Activated T-helper 2 cell treated with anti-CD3 and anti-CD28 coated beads, Interferon-gamma antibody, Interleukin-2, Interleukin-4, amounts not matched to agents 10 μg/mL and 5 μg/mL and 100 μg/mL, durations not matched to agents 14 hours and 24 hours and 36 hours (primary cell): ENCODE measurements at regions of chr10 and their contacts with region 1.

Region 1: GRCh38 chr10:62681211-62681940 is 123.1 kb upstream of the ADO start:
- DNase-seq: peak; percentile 63
- H3K4me3 Mint-ChIP-seq: no peak overlapping the region
- H3K27ac Mint-ChIP-seq: peak overlapping the region; percentile 58
- H3K4me1 Mint-ChIP-seq: peaks cover 45% of the 10 kb centered on the region
- H3K27me3 Mint-ChIP-seq: no peaks in the 10 kb centered on the region

Region 2: GRCh38 chr10:62422068-62422590 is 259.2 kb before region 1 on chr10:
- intact Hi-C with region 1: no loop called
- DNase-seq: no peak
- H3K4me3 Mint-ChIP-seq: no peak overlapping the region
- H3K27ac Mint-ChIP-seq: no peak overlapping the region
- H3K4me1 Mint-ChIP-seq: peaks cover 19% of the 10 kb centered on the region
- H3K27me3 Mint-ChIP-seq: peaks cover 8% of the 10 kb centered on the region

Region 3: GRCh38 chr10:62492012-62492869 is 189.1 kb before region 1 on chr10:
- intact Hi-C with region 1: no loop called
- DNase-seq: no peak
- H3K4me3 Mint-ChIP-seq: no peak overlapping the region
- H3K27ac Mint-ChIP-seq: no peak overlapping the region
- H3K4me1 Mint-ChIP-seq: no peaks in the 10 kb centered on the region
- H3K27me3 Mint-ChIP-seq: peaks cover 33% of the 10 kb centered on the region

Region 4: DNA sequence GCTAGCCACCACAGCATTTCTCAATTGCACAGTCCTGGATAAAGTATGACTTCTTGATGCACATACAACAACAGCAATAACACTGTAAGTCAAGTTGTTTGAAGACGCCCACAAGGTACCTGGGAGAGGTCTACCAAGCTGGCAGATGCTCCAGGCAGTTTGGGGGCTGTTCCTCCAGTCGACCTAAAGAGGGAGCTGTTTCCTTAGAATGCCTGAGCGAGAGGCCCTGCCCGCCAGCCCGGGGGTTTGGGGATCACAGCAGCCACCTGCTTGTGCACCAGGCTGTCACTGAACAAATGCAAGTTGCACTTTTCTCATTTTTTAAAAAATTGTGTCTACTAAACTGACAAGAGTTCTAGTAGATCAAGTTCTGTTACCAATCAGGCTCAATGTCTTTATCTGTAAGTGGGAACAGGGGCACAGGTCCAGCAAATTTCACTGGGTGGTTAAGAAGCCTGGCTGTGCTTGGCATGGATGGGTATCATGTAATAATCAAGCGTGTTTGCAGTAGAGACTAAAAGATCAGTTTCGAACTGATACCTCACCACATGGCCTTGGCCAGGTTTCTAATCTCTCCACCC is 70.6 kb before region 1 on chr10:
- intact Hi-C with region 1: loop called (anchors 1 kb)
- DNase-seq: peak; percentile 58
- H3K4me3 Mint-ChIP-seq: no peak overlapping the region
- H3K27ac Mint-ChIP-seq: no peak overlapping the region
- H3K4me1 Mint-ChIP-seq: peaks cover 52% of the 10 kb centered on the region
- H3K27me3 Mint-ChIP-seq: peaks cover 5% of the 10 kb centered on the region

Region 5: DNA sequence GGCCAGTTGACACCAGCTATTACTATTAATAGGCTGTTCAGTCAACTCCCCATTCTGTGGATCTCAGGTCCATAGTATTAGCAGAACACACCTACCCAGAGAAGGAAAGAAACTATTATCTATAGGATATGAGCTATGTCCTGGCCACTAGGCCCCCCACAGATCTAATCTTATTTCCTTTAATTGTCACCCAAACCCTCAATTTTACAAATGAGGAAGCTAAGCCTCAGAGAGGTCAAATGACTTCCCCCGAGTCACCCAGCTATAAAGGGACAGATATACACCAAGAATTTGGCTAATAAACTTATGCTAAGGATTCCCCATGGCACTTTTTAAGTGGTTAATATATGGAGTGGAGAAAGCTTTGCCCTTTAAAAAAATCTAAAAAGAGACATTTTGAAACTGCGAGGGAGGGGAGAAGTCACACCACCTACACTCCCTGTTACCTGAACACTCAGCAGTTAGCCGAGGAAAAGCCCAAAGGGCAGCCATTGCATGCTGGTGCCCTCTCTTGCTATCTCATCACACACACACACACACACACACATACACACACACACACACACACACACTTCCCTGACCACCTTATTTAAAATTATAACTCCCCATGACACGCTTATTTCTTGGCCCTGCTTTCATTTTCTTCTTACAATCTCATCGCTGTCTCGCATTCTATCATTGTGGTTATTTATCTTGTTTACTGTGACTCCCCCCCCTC is 33.8 kb before region 1 on chr10:
- intact Hi-C with region 1: loop called (anchors 1 kb)
- DNase-seq: no peak
- H3K4me3 Mint-ChIP-seq: no peak overlapping the region
- H3K27ac Mint-ChIP-seq: peak overlapping the region; percentile 39
- H3K4me1 Mint-ChIP-seq: peaks cover 58% of the 10 kb centered on the region
- H3K27me3 Mint-ChIP-seq: no peaks in the 10 kb centered on the region

Region 6: GRCh38 chr10:62669341-62669740 is 12.0 kb before region 1 on chr10:
- intact Hi-C with region 1: loop called (anchors 1 kb)
- DNase-seq: no peak
- H3K4me3 Mint-ChIP-seq: no peak overlapping the region
- H3K27ac Mint-ChIP-seq: no peak overlapping the region
- H3K4me1 Mint-ChIP-seq: peaks cover 15% of the 10 kb centered on the region
- H3K27me3 Mint-ChIP-seq: peaks cover 5% of the 10 kb centered on the region

Region 7: GRCh38 chr10:62779487-62780248 is 98.3 kb after region 1 on chr10:
- intact Hi-C with region 1: loop called (anchors 1 kb)
- DNase-seq: peak; percentile 31
- H3K4me3 Mint-ChIP-seq: no peak overlapping the region
- H3K27ac Mint-ChIP-seq: peak overlapping the region; percentile 51
- H3K4me1 Mint-ChIP-seq: peaks cover 36% of the 10 kb centered on the region
- H3K27me3 Mint-ChIP-seq: peaks cover 9% of the 10 kb centered on the region

Region 8: DNA sequence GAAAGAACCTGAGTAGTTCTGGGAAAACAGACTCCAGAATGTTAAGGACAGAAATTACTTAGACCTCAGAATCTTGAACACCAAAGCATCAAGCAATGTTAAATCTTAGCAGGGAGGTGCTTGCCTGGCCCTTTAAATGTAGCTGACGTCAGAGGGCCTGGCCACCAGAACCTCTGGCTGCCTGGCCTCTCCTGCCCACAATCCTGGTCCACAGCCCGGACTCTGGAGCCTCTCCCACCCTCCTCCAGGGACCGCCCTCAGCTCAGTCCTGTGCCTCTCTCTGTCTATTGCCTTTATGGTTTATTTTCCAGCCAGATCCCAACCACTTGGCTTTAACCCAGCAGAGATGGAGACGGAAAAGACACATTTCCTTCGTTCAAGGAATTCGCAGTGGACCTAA is 177.0 kb after region 1 on chr10:
- intact Hi-C with region 1: loop called (anchors 1 kb)
- DNase-seq: no peak
- H3K4me3 Mint-ChIP-seq: no peak overlapping the region
- H3K27ac Mint-ChIP-seq: no peak overlapping the region
- H3K4me1 Mint-ChIP-seq: peaks cover 78% of the 10 kb centered on the region
- H3K27me3 Mint-ChIP-seq: no peaks in the 10 kb centered on the region

Region 9: DNA sequence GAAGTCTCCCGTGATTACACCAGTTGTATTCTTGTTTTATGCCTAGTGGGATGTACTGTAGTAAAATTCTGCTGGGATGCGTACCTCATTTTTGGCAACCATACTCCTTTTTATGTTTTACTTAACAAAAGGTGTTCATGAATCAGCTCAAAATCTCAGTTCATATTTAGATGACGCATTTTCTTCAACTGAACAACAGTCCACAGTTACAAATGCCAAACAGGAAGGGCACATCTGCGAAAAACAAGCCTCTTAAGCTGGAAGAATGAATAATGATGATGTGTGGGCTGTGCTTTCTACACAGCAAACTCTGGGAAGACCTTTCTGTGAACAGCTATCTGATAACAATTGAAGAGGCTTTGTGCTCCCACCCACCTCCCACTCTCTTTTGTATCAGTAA is 383.3 kb after region 1 on chr10:
- intact Hi-C with region 1: no loop called
- DNase-seq: no peak
- H3K4me3 Mint-ChIP-seq: peak overlapping the region; percentile 31
- H3K27ac Mint-ChIP-seq: peak overlapping the region; percentile 81
- H3K4me1 Mint-ChIP-seq: peaks cover 43% of the 10 kb centered on the region
- H3K27me3 Mint-ChIP-seq: peaks cover 2% of the 10 kb centered on the region